Psoas muscle (tissue), 8 donors: ENCODE measurements at regions of chr6 and their contacts with region 1.

Region 1: DNA sequence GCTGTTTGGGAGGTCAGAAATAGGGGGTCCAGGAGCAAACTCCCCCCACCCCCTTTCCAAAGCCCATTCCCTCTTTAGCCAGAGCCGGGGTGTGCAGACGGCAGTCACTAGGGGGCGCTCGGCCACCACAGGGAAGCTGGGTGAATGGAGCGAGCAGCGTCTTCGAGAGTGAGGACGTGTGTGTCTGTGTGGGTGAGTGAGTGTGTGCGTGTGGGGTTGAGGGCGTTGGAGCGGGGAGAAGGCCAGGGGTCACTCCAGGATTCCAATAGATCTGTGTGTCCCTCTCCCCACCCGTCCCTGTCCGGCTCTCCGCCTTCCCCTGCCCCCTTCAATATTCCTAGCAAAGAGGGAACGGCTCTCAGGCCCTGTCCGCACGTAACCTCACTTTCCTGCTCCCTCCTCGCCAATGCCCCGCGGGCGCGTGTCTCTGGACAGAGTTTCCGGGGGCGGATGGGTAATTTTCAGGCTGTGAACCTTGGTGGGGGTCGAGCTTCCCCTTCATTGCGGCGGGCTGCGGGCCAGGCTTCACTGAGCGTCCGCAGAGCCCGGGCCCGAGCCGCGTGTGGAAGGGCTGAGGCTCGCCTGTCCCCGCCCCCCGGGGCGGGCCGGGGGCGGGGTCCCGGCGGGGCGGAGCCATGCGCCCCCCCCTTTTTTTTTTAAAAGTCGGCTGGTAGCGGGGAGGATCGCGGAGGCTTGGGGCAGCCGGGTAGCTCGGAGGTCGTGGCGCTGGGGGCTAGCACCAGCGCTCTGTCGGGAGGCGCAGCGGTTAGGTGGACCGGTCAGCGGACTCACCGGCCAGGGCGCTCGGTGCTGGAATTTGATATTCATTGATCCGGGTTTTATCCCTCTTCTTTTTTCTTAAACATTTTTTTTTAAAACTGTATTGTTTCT is at the start of gene VEGFA:
- DNase-seq: peak; percentile 90 to 95
- ATAC-seq: peak; percentile 67 to 70 (median 68)
- H3K4me3 ChIP-seq: peak within 1 kb of the TSS; percentile 97
- H3K27ac ChIP-seq: peak within 1 kb of the TSS; percentile 99
- H3K4me1 ChIP-seq: peaks cover 17% of the 10 kb centered on the region
- H3K27me3 ChIP-seq: no peaks in the 10 kb centered on the region
- CTCF ChIP-seq: peak; percentile 95
- total RNA-seq, gene VEGFA: 132 to 345 (median 208) TPM

Region 2: DNA sequence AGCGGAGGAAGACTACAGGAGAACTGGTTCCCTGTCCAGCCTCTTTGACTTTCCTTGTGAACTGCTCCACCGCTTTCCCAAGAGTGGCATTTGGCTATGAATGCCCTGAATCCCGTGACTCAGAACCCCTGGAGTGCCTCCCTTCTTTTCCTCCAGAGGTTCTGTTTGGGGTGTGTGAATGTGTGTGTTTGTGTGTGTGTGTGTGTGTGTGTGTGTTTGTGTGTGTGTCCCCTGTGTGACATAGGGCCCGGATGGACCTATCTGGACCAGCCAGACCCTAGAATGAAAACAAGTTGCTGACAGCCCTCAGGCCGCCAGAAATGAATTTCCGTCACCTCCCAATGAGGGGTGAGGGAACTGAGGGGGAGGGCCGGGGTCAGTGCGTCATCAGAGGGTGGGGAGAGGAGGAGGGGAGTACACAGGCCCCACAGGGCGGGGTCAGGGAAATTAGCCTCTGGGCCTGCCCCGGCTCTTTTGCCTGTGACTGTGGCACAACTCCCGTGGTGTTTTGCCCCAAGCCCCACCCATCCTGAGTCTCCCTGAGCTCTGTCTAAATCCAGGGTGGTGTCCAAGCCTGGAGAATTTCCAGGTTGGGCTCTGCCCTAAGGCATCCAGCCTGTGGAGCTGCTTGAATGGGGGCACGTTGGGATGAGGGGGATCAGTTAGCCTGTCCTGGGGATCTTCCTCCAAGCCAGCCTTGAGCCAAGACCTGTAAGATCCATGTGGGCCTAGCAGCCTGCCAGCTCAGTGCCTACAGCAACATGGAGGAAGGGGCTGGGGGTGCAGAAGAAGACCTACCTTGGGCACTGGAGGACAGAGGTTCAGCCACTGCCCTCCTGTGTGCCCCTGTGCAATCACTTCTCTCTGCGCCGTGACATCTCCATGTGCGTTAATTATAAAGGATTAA is 67.0 kb before region 1 on chr6:
- intact Hi-C with region 1: loop called in 1 of 2 experiments (anchors 5 kb)
- DNase-seq: peak; percentile 92 to 96
- ATAC-seq: peak; percentile 71 to 91 (median 88)
- H3K4me3 ChIP-seq: no peak overlapping the region
- H3K27ac ChIP-seq: peak overlapping the region; percentile 77
- H3K4me1 ChIP-seq: peaks cover 38% of the 10 kb centered on the region
- H3K27me3 ChIP-seq: no peaks in the 10 kb centered on the region
- CTCF ChIP-seq: no peak

Region 3: DNA sequence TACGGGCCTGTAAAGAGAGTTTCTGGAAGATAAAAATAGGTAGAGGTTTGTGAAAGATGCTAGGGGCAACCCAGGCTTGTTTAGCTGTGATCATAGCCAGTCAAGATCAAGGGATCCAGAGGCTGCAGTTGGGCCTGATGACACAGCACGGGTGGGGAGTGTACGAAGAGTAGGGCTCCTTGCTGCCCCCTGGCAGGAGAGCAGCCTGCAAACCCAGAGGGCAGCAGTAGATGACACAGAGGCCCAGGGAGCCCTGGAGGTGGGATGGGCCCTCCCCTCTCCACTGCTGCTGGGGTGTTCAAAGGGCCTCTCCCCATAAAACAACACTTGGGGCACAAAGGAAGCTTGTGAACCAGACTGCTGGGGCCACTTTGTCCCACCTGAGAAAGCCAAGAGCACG is 47.4 kb after region 1 on chr6:
- intact Hi-C with region 1: loop called in 1 of 2 experiments (anchors 5 kb)
- DNase-seq: peak; percentile 65 to 82
- ATAC-seq: peak; percentile 89 to 95 (median 94)
- H3K4me3 ChIP-seq: no peak overlapping the region
- H3K27ac ChIP-seq: no peak overlapping the region
- H3K4me1 ChIP-seq: peaks cover 9% of the 10 kb centered on the region
- H3K27me3 ChIP-seq: no peaks in the 10 kb centered on the region
- CTCF ChIP-seq: peak; percentile 47

Region 4: GRCh38 chr6:43951063-43951755 is 181.4 kb after region 1 on chr6:
- intact Hi-C with region 1: loop called (anchors 2 to 5 kb)
- DNase-seq: peak; percentile 61 to 76
- ATAC-seq: peak; percentile 16 to 31 (median 25)
- H3K4me3 ChIP-seq: no peak overlapping the region
- H3K27ac ChIP-seq: peak overlapping the region; percentile 86
- H3K4me1 ChIP-seq: peaks cover 21% of the 10 kb centered on the region
- H3K27me3 ChIP-seq: no peaks in the 10 kb centered on the region
- CTCF ChIP-seq: peak; percentile 45

Region 5: DNA sequence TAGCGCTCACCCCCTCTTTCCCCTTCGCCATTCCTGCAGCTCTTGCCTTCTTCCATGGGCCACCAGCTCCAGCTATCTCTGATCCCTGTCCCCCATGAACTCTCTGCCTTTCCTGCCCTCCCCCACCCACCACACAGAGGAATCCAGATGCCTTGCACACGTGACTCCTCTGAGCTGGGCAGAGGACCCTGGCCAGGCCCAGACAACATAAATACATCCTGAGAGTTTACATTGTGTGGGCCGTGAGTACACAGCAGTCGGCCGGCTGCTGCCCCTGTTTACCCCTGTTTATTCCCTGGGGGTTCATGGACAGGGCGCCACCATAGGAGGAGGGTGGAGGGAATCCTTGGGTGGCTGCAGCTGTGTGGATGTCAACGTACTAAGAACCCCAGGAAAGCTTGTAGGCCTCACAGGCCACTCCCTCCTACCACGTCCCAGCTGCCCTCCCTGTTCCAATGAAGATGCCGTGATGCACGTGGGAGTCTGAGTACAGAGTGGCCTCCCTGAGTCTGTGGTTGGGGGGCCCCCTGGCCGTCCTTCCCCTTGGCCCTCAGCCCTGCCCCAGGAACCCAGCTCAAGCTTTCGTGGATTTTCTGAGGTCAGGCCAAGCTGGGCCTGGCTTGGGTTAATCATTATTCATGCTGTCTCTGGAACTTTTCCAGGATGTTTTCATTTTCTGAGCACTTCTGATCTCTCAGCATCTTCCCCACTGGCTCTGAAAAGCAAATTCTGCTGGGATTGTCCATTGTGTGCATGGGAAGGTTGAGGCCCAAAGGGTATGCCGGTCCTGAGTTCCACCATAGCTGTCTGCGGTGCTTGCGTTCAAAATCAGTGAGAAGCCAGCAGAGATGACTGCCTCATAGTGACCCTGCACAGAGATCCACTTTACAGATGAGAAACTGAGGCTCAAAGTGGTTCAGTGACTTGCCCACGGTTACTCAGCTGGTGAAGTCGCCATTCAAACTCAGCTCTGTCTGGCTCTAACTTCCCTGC is 221.2 kb after region 1 on chr6:
- intact Hi-C with region 1: loop called (anchors 5 kb)
- DNase-seq: no peak
- ATAC-seq: peak in 2 of 4 donors; percentile 0 to 18
- H3K4me3 ChIP-seq: peak overlapping the region; percentile 15
- H3K27ac ChIP-seq: peak overlapping the region; percentile 94
- H3K4me1 ChIP-seq: peaks cover 68% of the 10 kb centered on the region
- H3K27me3 ChIP-seq: no peaks in the 10 kb centered on the region
- CTCF ChIP-seq: no peak